ENCODE measurements at regions of chr6 and their contacts with region 1.

Region 1: DNA sequence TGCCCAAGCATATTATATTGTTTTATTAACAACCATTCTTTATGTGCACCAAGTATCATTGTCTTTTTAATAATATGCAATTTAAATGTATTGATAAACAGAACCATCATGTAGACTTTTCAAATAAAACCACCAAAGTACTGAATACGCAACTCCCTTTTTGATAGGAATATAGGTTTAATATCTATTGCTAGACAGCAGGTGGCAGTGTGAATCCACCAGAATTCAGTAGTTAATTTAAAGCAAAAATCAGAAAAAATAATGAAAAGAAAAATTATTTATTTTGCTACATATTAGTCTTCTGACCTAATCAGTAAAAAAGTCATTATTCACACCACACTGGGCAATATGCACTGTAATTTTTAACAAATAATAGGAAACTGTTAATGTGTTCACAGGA is 143.7 kb downstream of the KLHL32 start:
- DNase-seq: peak; percentile 28
- ATAC-seq: no peak
- H3K4me3 ChIP-seq: no peak overlapping the region
- H3K27ac ChIP-seq: no peak overlapping the region
- H3K4me1 ChIP-seq: no peaks in the 10 kb centered on the region
- H3K27me3 ChIP-seq: 0 out of 2 replicates have a peak, but pooled peaks cover 9% of the 10 kb centered on the region
- CTCF ChIP-seq: peak; percentile 64

Region 2: DNA sequence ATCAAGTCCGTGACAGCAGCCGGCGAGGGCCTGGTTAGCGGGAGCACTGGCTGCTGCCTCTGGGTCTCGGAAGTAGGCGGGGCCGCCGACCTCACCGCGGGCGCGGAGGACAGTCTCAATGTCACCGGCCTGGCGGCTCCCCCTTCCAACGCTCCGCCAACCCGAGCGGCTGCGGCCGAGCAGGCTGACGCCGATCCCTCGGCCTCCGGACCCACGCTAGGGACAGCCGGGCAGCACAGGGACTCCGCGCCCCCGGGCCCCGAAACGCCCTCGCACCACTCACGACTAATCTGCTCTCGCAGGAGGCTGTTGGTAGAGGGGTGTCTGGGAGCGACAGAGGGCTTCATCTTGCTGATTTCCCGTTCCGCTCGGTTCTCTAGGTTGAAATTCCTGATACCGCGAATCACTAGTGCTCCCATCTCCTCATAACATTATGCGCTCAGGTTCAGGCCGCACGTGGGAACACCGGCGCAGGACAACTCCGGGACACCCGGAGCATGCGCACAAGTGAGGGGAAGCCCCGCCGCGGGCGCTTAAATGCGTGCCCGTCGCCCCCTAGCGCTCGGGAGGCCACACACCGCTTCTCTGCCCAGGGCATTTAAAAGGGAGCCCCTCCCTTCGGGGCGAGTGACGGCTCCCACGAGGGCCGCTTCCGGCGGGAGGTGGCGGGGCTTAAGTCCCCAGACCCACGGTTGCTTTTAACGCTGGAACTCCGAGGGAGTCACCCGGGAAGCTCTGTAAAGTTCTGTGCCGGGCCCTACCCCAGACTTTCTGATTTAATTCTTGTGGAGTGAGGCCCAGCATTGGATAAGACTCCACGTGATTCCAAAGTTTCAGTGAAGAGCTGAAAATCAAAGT is 170.6 kb before region 1 on chr6 and contains the start of gene NDUFAF4:
- CTCF ChIA-PET with region 1: no interaction called
- POLR2A ChIA-PET with region 1: no interaction called
- intact Hi-C with region 1: no loop called
- DNase-seq: peak; percentile 90
- ATAC-seq: peak; percentile 87
- H3K4me3 ChIP-seq: peak within 1 kb of the TSS; percentile 77
- H3K27ac ChIP-seq: peak within 1 kb of the TSS; percentile 61
- H3K4me1 ChIP-seq: peaks cover 17% of the 10 kb centered on the region
- H3K27me3 ChIP-seq: no peaks in the 10 kb centered on the region
- CTCF ChIP-seq: peak; percentile 79
- total RNA-seq, gene NDUFAF4: 24.2 and 34.0 TPM in 2 replicates

Region 3: DNA sequence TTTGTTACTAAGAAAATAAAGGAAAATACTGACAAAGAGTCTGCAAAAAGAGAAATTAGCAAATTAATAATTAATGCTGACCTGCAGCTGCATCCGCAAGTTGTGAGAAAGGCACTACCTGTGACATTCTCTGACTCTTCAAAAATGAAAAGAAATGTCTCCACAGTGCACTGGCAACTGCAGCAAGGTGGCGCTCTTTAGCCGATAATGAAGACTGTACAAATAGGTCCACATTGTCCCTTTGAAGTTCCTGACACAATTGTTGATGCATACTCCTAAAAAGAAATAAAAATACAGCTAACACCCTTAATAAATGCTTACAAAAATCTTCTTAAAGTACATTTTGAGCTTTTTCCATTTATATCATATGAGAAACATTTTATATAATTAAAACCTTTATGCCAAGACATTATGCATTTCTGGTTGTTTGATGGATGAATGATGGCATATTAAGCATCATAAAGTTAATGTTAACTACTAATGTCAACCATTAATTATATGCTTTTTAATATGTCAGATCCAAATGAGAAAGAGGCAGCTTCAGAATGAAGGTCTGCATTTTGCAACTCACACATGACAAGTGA is 118.3 kb after region 1 on chr6:
- CTCF ChIA-PET with region 1: no interaction called
- POLR2A ChIA-PET with region 1: no interaction called
- intact Hi-C with region 1: loop called (anchors 1 kb)
- DNase-seq: peak; percentile 62
- ATAC-seq: peak; percentile 83
- H3K4me3 ChIP-seq: no peak overlapping the region
- H3K27ac ChIP-seq: no peak overlapping the region
- H3K4me1 ChIP-seq: no peaks in the 10 kb centered on the region
- H3K27me3 ChIP-seq: no peaks in the 10 kb centered on the region
- CTCF ChIP-seq: peak; percentile 83

Region 4: DNA sequence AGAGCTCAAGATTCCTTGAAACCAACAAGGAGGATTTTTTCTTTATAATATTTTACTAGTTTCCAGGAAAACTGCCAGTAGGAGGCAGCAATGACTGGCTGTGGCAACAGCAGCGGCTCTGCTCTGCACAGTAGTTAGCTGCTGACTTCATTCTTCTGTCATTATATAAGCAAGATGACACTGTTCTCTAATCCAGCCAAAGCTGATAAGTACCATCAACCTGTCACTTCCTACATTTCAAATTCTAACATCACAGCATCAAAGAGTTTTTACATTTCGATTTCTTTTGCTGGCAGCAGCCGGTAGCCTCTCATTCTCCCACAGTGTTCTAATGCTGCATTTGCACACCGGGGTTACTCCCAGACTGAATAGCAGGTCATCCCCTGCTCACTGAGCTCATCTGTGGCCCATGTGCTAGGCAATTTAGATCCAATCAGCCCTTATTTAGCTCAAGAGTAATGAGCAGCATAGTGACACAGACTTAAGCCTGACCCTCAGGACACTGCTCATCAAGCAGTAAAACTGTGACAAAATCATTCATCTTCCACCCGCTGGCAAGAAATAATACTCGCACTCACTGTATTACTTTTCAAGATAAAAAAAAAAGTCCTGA is 147.1 kb after region 1 on chr6:
- CTCF ChIA-PET with region 1: no interaction called
- POLR2A ChIA-PET with region 1: no interaction called
- intact Hi-C with region 1: no loop called
- DNase-seq: peak; percentile 55
- ATAC-seq: peak; percentile 66
- H3K4me3 ChIP-seq: no peak overlapping the region
- H3K27ac ChIP-seq: no peak overlapping the region
- H3K4me1 ChIP-seq: no peaks in the 10 kb centered on the region
- H3K27me3 ChIP-seq: no peaks in the 10 kb centered on the region
- CTCF ChIP-seq: peak; percentile 54

Region 5: GRCh38 chr6:97282726-97283617 is 214.8 kb after region 1 on chr6 and contains the start of gene MMS22L:
- CTCF ChIA-PET with region 1: no interaction called
- POLR2A ChIA-PET with region 1: no interaction called
- intact Hi-C with region 1: loop called (anchors 10 kb)
- DNase-seq: peak; percentile 91
- ATAC-seq: peak; percentile 95
- H3K4me3 ChIP-seq: peak within 1 kb of the TSS; percentile 98
- H3K27ac ChIP-seq: no peak within 1 kb of the TSS
- H3K4me1 ChIP-seq: 0 out of 2 replicates have a peak, but pooled peaks cover 15% of the 10 kb centered on the region
- H3K27me3 ChIP-seq: no peaks in the 10 kb centered on the region
- CTCF ChIP-seq: no peak
- total RNA-seq, gene MMS22L: 19.3 and 23.8 TPM in 2 replicates